Prostate gland (tissue), 2 donors: ENCODE measurements at regions of chr14 and their contacts with region 1.

Region 1: DNA sequence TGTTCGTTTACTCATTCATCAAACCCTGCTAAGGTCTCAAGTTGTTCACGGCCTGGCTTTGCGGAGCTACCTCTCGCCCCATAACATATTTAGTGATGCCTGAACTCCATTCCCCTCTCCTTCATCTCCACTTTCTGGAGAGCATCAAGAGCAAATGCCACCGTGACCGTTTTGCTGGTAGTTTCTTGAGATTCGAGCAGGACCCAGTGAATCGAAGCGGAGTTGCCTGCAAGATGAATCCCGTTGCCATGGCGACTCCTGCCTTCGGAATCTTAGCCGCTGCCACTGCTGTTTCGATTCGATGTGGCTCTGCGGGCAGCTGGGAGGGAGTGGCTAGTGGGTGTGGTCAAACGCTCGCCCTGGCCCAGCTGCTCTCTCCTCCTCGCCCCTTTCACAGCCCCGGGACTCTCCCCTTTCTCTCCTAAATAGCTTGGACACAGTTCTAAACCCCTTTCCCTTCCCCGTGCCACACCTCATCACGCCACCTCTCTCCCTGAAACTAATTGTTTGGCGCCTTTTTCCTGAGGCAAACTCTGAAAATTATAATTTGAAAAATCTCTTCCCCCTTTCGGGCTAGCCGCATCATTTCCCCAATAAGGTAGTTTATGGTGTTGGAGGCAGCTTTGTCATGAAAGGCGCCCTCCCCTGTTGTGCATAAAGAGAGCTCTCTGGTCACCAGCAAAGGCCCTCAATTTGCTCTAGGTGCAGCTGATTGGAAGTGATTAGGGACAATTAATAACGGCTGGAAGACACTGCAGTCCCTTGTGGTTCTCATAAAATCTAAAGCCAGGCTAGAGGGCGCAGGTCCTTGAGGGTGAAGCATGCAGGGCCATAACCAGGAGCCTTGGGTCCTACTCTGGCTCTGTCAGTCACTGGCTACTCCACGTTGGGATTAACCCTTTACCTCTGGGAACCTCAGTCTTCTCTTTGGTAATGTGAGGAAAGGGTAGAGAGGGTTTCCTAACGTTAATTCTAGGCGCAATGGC is 1.6 kb downstream of the DAAM1 start:
- DNase-seq: peak; percentile 80
- H3K4me3 ChIP-seq: peak overlapping the region; percentile 66 to 76
- H3K27ac ChIP-seq: peak overlapping the region; percentile 94 to 95
- H3K4me1 ChIP-seq: no peaks in the 10 kb centered on the region
- H3K27me3 ChIP-seq: no peaks in the 10 kb centered on the region
- CTCF ChIP-seq: no peak
- POLR2A ChIP-seq: no peak

Region 2: GRCh38 chr14:59098377-59098776 is 91.7 kb before region 1 on chr14:
- intact Hi-C with region 1: no loop called
- DNase-seq: no peak
- H3K4me3 ChIP-seq: no peak overlapping the region
- H3K27ac ChIP-seq: no peak overlapping the region
- H3K4me1 ChIP-seq: no peaks in the 10 kb centered on the region
- H3K27me3 ChIP-seq: no peaks in the 10 kb centered on the region
- CTCF ChIP-seq: no peak
- POLR2A ChIP-seq: no peak

Region 3: GRCh38 chr14:59275653-59276052 is 85.6 kb after region 1 on chr14:
- intact Hi-C with region 1: loop called (anchors 10 kb)
- DNase-seq: no peak
- H3K4me3 ChIP-seq: no peak overlapping the region
- H3K27ac ChIP-seq: peak overlapping the region; percentile 28 to 31
- H3K4me1 ChIP-seq: no peaks in the 10 kb centered on the region
- H3K27me3 ChIP-seq: no peaks in the 10 kb centered on the region
- CTCF ChIP-seq: no peak
- POLR2A ChIP-seq: no peak

Region 4: GRCh38 chr14:59333668-59334067 is 143.6 kb after region 1 on chr14:
- intact Hi-C with region 1: loop called (anchors 5 kb)
- DNase-seq: peak; percentile 67
- H3K4me3 ChIP-seq: no peak overlapping the region
- H3K27ac ChIP-seq: peak overlapping the region; percentile 34 to 65
- H3K4me1 ChIP-seq: no peaks in the 10 kb centered on the region
- H3K27me3 ChIP-seq: no peaks in the 10 kb centered on the region
- CTCF ChIP-seq: no peak
- POLR2A ChIP-seq: no peak

Region 5: DNA sequence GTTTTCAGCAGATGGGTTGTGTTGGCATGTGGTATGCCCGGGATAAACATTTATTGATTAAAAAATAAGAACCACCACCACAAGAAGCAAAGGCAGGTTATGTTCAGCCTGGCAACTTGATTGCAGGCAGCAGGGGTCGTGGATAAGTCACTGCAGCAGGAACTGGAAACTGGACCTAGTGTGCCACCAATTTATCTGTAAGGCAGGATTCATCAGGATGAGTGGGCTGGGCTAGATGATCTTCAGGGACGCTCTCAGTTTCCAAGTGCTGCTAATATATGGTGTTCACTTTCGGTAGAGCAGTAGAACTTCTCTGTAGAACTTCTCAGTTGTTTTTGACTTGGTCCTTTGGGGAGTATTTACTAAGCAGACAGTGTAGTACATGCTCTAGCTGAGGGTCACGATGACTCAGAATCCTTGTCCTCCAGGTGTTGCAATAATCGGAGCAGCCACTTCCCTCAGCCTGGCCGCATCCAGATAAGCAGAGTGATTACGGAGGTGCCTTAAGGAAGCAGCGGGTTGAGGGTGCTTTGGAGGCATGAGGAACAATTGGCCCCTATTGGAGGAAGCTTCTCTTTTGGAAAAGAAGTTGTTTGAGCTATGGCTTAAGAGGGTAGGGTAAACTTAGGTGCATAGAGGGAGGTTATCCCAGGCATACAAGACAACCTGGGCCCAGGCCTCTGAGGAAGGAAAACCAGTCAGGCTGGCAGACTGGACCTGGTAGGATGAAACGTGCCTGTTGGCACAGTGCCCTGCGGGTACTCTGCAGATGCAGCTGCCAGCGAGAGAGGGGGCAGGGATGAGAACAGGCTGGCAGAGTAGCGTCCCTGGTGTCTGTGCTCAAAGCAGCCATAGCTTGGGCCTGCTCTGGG is 171.1 kb after region 1 on chr14:
- intact Hi-C with region 1: no loop called
- DNase-seq: peak; percentile 71
- H3K4me3 ChIP-seq: no peak overlapping the region
- H3K27ac ChIP-seq: peak overlapping the region; percentile 8 to 46
- H3K4me1 ChIP-seq: peaks cover 5% of the 10 kb centered on the region
- H3K27me3 ChIP-seq: no peaks in the 10 kb centered on the region
- CTCF ChIP-seq: no peak
- POLR2A ChIP-seq: no peak